Calu3 (cell line): ENCODE measurements at regions of chr7 and their contacts with region 1.

Region 1: DNA sequence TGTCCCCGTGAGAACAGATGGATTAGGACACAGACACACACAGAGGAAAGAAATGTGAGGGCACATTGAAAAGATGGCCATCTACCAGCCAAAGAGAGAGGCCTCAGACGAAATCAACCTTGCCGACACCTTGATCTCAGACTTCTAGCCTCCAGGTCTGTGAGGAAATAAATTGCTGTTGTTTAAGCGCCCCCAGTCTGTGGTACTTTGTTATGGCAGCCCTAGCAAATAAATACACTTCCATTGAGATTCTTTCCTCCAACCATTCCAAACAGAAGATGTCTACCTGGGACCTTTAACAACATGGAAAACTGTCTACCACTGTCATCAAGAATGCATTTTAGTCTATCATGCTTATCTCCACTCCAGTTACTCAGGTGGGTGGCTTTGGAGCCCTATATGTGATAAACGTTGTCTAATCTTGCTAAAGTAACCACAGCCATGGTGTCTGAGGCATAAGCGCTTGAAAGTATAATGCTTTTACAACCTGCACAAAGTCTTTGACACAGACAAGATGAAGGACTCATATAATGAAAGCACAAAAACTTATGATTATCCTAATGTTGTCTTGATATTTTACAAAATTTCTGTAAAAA is 244.3 kb downstream of the MTERF1 start:
- DNase-seq: peak; percentile 34
- H3K4me3 Mint-ChIP-seq: no peak overlapping the region
- H3K27ac Mint-ChIP-seq: no peak overlapping the region
- H3K4me1 Mint-ChIP-seq: peaks cover 26% of the 10 kb centered on the region
- H3K27me3 Mint-ChIP-seq: no peaks in the 10 kb centered on the region
- CTCF ChIP-seq: peak; percentile 31

Region 2: GRCh38 chr7:91089382-91089963 is 546.8 kb before region 1 on chr7:
- CTCF ChIA-PET with region 1: no interaction called
- intact Hi-C with region 1: loop called (anchors 1 kb)
- DNase-seq: peak; percentile 15
- H3K4me3 Mint-ChIP-seq: no peak overlapping the region
- H3K27ac Mint-ChIP-seq: no peak overlapping the region
- H3K4me1 Mint-ChIP-seq: no peaks in the 10 kb centered on the region
- H3K27me3 Mint-ChIP-seq: no peaks in the 10 kb centered on the region
- CTCF ChIP-seq: peak; percentile 48

Region 3: GRCh38 chr7:91288208-91288824 is 347.9 kb before region 1 on chr7:
- CTCF ChIA-PET with region 1: no interaction called
- intact Hi-C with region 1: loop called (anchors 1 kb)
- DNase-seq: peak; percentile 49
- H3K4me3 Mint-ChIP-seq: no peak overlapping the region
- H3K27ac Mint-ChIP-seq: no peak overlapping the region
- H3K4me1 Mint-ChIP-seq: peaks cover 33% of the 10 kb centered on the region
- H3K27me3 Mint-ChIP-seq: no peaks in the 10 kb centered on the region
- CTCF ChIP-seq: peak; percentile 21